MCF 10A (cell line): ENCODE measurements at regions of chr1 and their contacts with region 1.

Region 1: DNA sequence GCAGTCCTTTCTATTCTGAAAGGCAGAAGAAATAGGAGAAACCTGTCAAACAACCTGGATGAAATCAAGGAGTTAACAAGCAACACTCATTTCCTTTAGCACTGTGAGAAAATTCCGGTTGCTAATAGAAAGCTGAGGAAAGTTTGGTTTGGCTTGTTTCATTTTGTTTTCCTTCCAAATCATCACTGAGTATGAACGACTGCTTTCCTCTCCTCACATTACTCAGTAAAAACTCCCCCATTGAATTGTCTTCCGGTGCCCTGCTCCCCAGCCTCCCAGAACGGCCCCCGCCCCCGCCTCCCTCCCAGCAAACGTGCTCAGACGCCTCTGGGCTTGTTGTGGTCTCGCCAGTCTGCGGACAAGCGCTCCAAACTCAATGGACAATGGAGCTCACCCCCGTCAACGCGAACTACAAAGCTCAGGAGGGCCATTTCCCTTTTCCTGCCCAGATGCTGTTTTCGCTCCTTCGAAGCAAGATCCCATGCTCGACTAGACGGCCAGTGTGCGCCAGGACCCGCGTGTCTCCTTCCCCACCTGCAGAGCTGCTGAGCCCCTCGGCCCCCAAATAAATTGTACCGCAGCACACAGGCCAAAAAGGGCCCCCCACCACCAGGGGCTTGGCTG is 747 bp downstream of the STX6 start:
- DNase-seq: peak; percentile 86
- H3K4me3 Mint-ChIP-seq: peak overlapping the region; percentile 93
- H3K27ac Mint-ChIP-seq: peak overlapping the region; percentile 91
- H3K4me1 Mint-ChIP-seq: peaks cover 19% of the 10 kb centered on the region
- H3K27me3 Mint-ChIP-seq: no peaks in the 10 kb centered on the region
- CTCF ChIP-seq: no peak

Region 2: GRCh38 chr1:180881806-180882509 is 140.0 kb before region 1 on chr1:
- CTCF ChIA-PET with region 1: interaction called, 9 read pairs
- POLR2A ChIA-PET with region 1: interaction called, 4 read pairs
- intact Hi-C with region 1: loop called (anchors 5 kb)
- DNase-seq: peak; percentile 60
- H3K4me3 Mint-ChIP-seq: no peak overlapping the region
- H3K27ac Mint-ChIP-seq: peak overlapping the region; percentile 44
- H3K4me1 Mint-ChIP-seq: peaks cover 14% of the 10 kb centered on the region
- H3K27me3 Mint-ChIP-seq: no peaks in the 10 kb centered on the region
- CTCF ChIP-seq: peak; percentile 67

Region 3: DNA sequence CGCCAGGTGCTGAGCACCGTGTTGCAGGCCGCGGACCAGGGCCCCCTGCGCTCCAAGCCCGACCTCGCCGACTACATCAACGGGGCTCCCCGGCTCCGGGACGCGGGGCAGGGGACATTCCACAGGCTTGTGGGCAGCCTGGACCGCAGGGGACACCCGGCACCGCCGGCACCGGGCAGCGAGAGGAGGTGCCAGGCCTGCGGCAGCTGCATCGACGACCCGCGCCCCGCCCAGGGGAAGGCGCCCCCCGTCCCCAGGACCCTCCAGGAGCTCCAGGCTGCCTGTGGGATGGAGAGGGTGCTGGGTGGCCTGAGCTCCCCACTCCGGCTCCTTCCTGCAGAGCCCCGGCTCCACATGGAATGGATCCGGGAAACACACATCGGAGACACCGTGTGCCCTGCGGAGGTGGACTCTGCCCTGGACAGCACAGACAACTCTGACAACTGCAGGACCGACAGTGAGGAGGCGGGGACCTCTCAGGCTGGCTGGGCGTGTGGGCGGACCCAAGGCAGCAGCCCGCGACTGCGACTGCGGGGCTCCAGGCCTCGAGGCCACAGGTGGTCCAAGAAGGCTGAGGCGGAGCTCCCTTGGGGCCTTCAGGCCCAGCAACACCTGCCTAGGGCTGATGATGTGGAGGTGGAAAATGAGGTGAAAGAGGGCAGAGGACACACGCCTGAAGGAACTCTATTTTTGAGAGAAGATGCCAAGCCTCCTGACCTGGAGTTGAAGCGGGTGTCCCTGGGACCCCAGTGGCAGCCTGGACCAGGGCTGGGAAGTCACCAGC is 86.4 kb before region 1 on chr1:
- CTCF ChIA-PET with region 1: no interaction called
- POLR2A ChIA-PET with region 1: no interaction called
- intact Hi-C with region 1: no loop called
- DNase-seq: no peak
- H3K4me3 Mint-ChIP-seq: no peak overlapping the region
- H3K27ac Mint-ChIP-seq: no peak overlapping the region
- H3K4me1 Mint-ChIP-seq: no peaks in the 10 kb centered on the region
- H3K27me3 Mint-ChIP-seq: peaks cover 25% of the 10 kb centered on the region
- CTCF ChIP-seq: no peak

Region 4: GRCh38 chr1:181010789-181011188 is 11.1 kb before region 1 on chr1:
- CTCF ChIA-PET with region 1: interaction called, 5 read pairs
- POLR2A ChIA-PET with region 1: interaction called, 24 read pairs
- intact Hi-C with region 1: no loop called
- DNase-seq: no peak
- H3K4me3 Mint-ChIP-seq: no peak overlapping the region
- H3K27ac Mint-ChIP-seq: no peak overlapping the region
- H3K4me1 Mint-ChIP-seq: peaks cover 27% of the 10 kb centered on the region
- H3K27me3 Mint-ChIP-seq: no peaks in the 10 kb centered on the region
- CTCF ChIP-seq: no peak

Region 5: GRCh38 chr1:181044449-181044966 is 22.6 kb after region 1 on chr1:
- CTCF ChIA-PET with region 1: interaction called, 21 read pairs
- POLR2A ChIA-PET with region 1: interaction called, 105 read pairs
- intact Hi-C with region 1: no loop called
- DNase-seq: peak; percentile 99
- H3K4me3 Mint-ChIP-seq: peak overlapping the region; percentile 58
- H3K27ac Mint-ChIP-seq: peak overlapping the region; percentile 88
- H3K4me1 Mint-ChIP-seq: peaks cover 41% of the 10 kb centered on the region
- H3K27me3 Mint-ChIP-seq: no peaks in the 10 kb centered on the region
- CTCF ChIP-seq: no peak

Region 6: DNA sequence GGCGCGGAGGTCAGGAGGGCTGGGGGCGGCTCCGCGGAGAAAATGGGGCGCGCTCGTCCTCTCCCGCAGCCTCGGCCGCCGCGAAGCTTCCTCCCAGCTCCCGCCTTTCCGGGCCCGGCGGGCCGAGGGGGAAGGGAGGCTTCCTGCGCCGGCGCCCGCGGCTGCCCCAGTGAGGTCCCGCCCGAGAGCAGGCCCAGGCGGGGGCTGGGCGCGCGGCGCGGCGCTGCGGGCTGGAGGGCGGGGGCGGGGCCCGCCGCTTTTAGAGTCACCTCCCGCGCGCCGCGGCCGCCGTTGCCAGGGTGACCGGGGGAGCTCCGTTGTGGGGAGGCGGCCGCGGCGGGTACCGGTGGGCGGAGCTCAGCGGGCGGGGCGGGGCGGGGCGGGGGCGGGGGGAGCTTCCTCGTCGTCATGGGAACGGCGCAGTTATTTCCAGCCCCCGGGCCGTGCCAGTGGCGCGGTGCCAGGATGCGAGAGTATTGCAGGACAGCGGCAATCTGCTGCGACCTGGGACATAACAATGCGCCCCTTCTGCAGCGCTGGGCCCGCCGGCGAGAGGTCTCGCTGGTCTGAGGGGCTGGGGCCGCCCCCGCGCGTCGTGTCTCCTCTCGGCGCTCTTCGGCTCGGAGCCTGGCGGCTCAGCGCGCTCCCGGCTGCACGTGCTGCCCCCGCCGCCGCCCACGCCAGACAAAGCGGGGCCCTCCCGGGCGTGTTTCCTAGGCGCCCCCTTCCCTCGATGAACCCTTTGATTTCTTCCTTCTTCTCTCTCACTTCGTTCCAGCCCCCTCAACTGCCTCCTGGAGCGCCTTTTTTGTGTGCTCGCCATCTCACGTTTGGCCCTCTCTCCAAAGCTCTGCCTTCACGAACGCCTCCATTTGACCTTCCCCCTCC is 83.5 kb after region 1 on chr1:
- CTCF ChIA-PET with region 1: interaction called, 4 read pairs
- POLR2A ChIA-PET with region 1: interaction called, 48 read pairs
- intact Hi-C with region 1: no loop called
- DNase-seq: peak; percentile 95
- H3K4me3 Mint-ChIP-seq: peak overlapping the region; percentile 65
- H3K27ac Mint-ChIP-seq: peak overlapping the region; percentile 22
- H3K4me1 Mint-ChIP-seq: peaks cover 61% of the 10 kb centered on the region
- H3K27me3 Mint-ChIP-seq: no peaks in the 10 kb centered on the region
- CTCF ChIP-seq: no peak

Region 7: GRCh38 chr1:181134543-181135362 is 112.8 kb after region 1 on chr1:
- CTCF ChIA-PET with region 1: interaction called, 97 read pairs
- POLR2A ChIA-PET with region 1: interaction called, 67 read pairs
- intact Hi-C with region 1: loop called (anchors 2 kb)
- DNase-seq: peak; percentile 96
- H3K4me3 Mint-ChIP-seq: peak overlapping the region; percentile 71
- H3K27ac Mint-ChIP-seq: peak overlapping the region; percentile 100
- H3K4me1 Mint-ChIP-seq: peaks cover 53% of the 10 kb centered on the region
- H3K27me3 Mint-ChIP-seq: no peaks in the 10 kb centered on the region
- CTCF ChIP-seq: no peak